A549 (cell line): ENCODE measurements at regions of chr16 and their contacts with region 1.

Region 1: DNA sequence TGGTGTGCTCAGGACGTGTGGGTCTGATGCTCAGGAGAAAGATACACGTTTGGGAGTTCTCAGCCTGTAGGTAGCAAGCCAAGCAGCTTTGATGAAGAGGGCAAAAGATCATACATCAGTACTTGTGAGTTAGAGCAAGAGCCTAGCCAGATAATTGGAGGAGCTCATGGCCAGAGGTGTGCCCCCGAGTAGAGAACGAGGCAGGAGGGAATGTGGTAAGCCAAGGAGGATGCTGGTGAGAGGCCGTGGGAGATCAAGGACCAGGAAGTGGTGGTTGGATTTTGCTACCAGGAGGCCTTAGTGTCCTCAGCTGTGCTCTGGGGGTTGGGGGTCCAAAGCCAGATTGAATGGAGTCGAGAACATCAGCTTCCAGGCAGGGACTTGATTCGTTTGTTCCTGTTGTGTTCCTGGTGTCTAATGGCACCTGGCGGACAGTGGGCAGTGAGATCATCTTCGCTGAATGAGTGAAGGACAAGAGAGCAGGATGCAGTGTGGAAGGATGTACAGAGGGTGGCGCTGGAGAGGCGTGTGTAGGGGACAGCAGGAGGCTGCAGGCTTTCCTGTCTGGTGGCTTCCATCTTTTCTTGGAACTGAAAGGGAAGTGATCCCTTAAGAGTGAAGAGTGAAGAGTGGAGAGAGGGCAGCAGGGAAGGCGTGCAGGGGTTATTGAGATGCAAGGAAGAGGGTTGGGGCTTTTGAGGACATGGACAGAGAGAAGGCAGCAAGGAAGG is 11.6 kb downstream of the FBXL19 start:
- DNase-seq: peak; percentile 45 to 72
- ATAC-seq: peak; percentile 57 to 84; a peak in 4 of 6 replicates
- H3K4me3 ChIP-seq: no peak overlapping the region
- H3K27ac ChIP-seq: no peak overlapping the region
- H3K4me1 ChIP-seq: peaks cover 4% of the 10 kb centered on the region; the same call in 1 of the 3 replicates
- CTCF ChIP-seq: peak; percentile 40
- EP300 ChIP-seq: no peak
- POLR2A ChIP-seq: no peak
- RAD21 ChIP-seq: 0 out of 5 replicates have a peak, but pooled peaks have one; percentile 15 to 22

Region 2: DNA sequence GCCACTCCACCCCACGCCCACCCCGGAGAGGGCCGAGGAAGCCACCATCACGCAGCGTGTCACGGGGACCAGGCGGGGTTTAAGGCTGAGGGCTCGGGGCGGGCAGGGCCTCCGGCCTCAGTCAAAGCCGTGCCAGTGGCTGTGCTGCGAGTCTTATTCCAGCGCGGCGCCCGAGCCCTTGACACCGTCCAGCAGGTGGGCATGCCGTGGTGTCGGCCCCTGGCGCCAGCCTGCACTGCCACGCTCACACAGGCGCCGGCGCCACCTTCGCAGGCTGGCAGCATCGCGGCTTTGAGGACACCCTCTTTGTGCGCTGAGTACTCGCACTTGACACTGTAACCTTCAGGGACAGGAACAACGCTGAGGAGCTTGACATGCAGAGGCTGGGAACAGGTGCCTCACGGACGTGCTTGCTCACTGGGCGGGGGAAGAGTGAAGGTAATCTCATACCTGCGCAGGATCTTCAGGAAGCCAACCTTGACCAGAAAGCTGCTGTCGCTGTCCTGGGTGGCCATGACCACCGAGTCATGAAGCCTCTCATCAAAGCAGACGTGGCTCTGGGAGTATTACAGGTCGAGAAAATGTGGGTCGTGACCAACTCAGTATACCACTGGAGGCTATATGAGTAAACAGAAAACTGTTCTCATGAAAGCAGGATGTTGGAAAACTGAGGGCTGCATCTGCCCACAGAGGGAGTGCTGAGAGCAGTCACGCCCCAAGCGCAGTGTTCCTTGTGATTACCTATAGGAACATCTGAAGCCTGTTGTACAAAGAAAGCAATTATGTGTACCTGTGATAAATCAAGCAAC is 113.8 kb before region 1 on chr16:
- CTCF ChIA-PET with region 1: no interaction called
- POLR2A ChIA-PET with region 1: no interaction called
- DNase-seq: no peak
- ATAC-seq: peak; percentile 30 to 45; a peak in 3 of 6 replicates
- H3K4me3 ChIP-seq: no peak overlapping the region
- H3K27ac ChIP-seq: no peak overlapping the region
- H3K4me1 ChIP-seq: no peaks in the 10 kb centered on the region
- CTCF ChIP-seq: no peak
- EP300 ChIP-seq: no peak
- POLR2A ChIP-seq: no peak
- RAD21 ChIP-seq: no peak

Region 3: GRCh38 chr16:30924076-30924912 is 10.7 kb before region 1 on chr16:
- CTCF ChIA-PET with region 1: interaction called, 134 read pairs
- POLR2A ChIA-PET with region 1: no interaction called
- DNase-seq: no peak
- ATAC-seq: no peak
- H3K4me3 ChIP-seq: peak overlapping the region; percentile 87
- H3K27ac ChIP-seq: peak overlapping the region; percentile 95 to 99
- H3K4me1 ChIP-seq: peaks cover 15% of the 10 kb centered on the region; the same call in 2 of the 3 replicates
- CTCF ChIP-seq: no peak
- EP300 ChIP-seq: no peak
- POLR2A ChIP-seq: no peak
- RAD21 ChIP-seq: no peak

Region 4: GRCh38 chr16:30948667-30949649 is 14.0 kb after region 1 on chr16 and contains the start of gene ORAI3:
- CTCF ChIA-PET with region 1: interaction called, 134 read pairs
- POLR2A ChIA-PET with region 1: no interaction called
- DNase-seq: peak; percentile 53 to 57
- ATAC-seq: peak; percentile 69 to 81
- H3K4me3 ChIP-seq: peak within 1 kb of the TSS; percentile 73
- H3K27ac ChIP-seq: peak within 1 kb of the TSS; percentile 90 to 99
- H3K4me1 ChIP-seq: peaks cover 25% of the 10 kb centered on the region
- CTCF ChIP-seq: no peak
- EP300 ChIP-seq: no peak
- POLR2A ChIP-seq: peak; percentile 27; the same call in 1 of the 2 replicates
- RAD21 ChIP-seq: no peak
- polyA plus RNA-seq, gene ORAI3: 14.1 and 17.3 TPM in 2 replicates

Region 5: GRCh38 chr16:30984669-30985400 is 49.8 kb after region 1 on chr16 and contains the start of gene HSD3B7:
- CTCF ChIA-PET with region 1: no interaction called
- POLR2A ChIA-PET with region 1: no interaction called
- DNase-seq: peak; percentile 80 to 95
- ATAC-seq: peak; percentile 75 to 92
- H3K4me3 ChIP-seq: peak within 1 kb of the TSS; percentile 46
- H3K27ac ChIP-seq: peak within 1 kb of the TSS; percentile 84 to 88
- H3K4me1 ChIP-seq: peaks cover 13% of the 10 kb centered on the region
- CTCF ChIP-seq: peak; percentile 86
- EP300 ChIP-seq: no peak
- POLR2A ChIP-seq: peak; percentile 21; the same call in 1 of the 2 replicates
- RAD21 ChIP-seq: peak; percentile 86 to 90
- polyA plus RNA-seq, gene HSD3B7: 10.5 and 15.2 TPM in 2 replicates

Region 6: GRCh38 chr16:31032736-31033708 is 98.0 kb after region 1 on chr16 and contains the start of gene STX4:
- CTCF ChIA-PET with region 1: no interaction called
- POLR2A ChIA-PET with region 1: no interaction called
- DNase-seq: peak; percentile 91 to 97
- ATAC-seq: peak; percentile 89 to 90
- H3K4me3 ChIP-seq: peak within 1 kb of the TSS; percentile 72
- H3K27ac ChIP-seq: peak within 1 kb of the TSS; percentile 85 to 95
- H3K4me1 ChIP-seq: peaks cover 8% of the 10 kb centered on the region; the same call in 1 of the 3 replicates
- CTCF ChIP-seq: no peak
- EP300 ChIP-seq: no peak
- POLR2A ChIP-seq: no peak; the same call in 1 of the 2 replicates
- RAD21 ChIP-seq: no peak
- polyA plus RNA-seq, gene STX4: 37.0 and 39.7 TPM in 2 replicates